CD8-positive, alpha-beta memory T cell (primary cell): ENCODE measurements at regions of chr19 and their contacts with region 1.

Region 1: GRCh38 chr19:7502552-7502951 is 13.4 kb upstream of the ZNF358 start:
- DNase-seq: no peak
- H3K4me3 ChIP-seq: no peak overlapping the region
- H3K4me3 Mint-ChIP-seq: no peak overlapping the region
- H3K27ac ChIP-seq: no peak overlapping the region
- H3K27ac Mint-ChIP-seq: no peak overlapping the region
- H3K4me1 ChIP-seq: peaks cover 8% of the 10 kb centered on the region
- H3K4me1 Mint-ChIP-seq: peaks cover 7 to 12% (median 9%) of the 10 kb centered on the region in 3 donors
- H3K27me3 ChIP-seq: peaks cover 9% of the 10 kb centered on the region
- H3K27me3 Mint-ChIP-seq: peaks cover 45 to 51% of the 10 kb centered on the region in 2 donors

Region 2: GRCh38 chr19:7460562-7460966 is 42.0 kb before region 1 on chr19:
- CTCF ChIA-PET with region 1: no interaction called
- POLR2A ChIA-PET with region 1: no interaction called
- DNase-seq: no peak
- H3K4me3 ChIP-seq: no peak overlapping the region
- H3K4me3 Mint-ChIP-seq: no peak overlapping the region
- H3K27ac ChIP-seq: no peak overlapping the region
- H3K27ac Mint-ChIP-seq: peak overlapping the region in 1 of 8 donors; percentile 10
- H3K4me1 ChIP-seq: no peaks in the 10 kb centered on the region
- H3K4me1 Mint-ChIP-seq: peaks cover 2 to 7% (median 4%) of the 10 kb centered on the region in 3 donors
- H3K27me3 ChIP-seq: no peaks in the 10 kb centered on the region
- H3K27me3 Mint-ChIP-seq: no peaks in the 10 kb centered on the region

Region 3: DNA sequence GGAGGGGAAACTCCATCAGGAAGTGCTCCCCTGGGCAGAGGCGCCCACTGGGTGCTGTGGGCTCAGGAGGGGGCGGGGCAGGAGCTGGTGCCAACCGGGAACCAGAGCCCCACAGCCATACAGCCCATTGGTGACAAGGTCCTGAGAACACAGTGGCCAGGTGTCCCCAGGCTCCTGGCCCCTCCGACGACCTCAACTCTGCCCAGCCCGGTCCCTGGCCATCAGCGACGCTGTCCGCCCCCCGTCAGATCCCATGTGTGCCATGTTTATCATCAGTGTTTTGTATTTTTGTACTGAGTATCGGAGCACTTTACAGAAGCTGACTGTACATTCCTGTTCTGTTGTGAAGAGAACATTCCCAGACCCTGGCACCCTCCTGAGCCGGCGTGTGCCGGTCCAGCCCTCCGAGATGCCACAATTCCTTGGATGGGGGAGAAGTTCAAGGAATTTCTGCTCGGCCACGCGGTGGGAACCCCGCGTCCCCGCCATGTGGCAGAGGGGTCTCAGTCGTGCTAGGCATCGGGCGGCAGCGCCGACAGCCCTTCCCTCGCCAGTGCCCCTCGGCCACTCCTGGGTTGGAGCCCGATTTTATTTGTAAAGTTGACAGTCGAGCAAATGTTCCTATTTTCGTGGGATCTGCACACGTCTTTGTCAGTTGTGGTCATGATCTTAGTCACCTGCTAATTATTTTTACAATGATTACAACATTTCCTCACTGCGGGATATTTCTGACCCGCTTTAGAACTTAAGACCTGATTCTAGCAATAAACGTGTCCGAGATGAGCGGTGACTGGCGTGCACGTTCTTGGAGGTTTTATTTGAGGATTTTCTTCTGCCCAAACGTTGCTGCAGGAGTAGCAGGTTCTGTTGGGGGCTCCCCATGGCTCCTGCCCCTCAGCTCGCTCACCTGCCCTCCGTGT is 30.6 kb before region 1 on chr19:
- CTCF ChIA-PET with region 1: no interaction called
- POLR2A ChIA-PET with region 1: no interaction called
- DNase-seq: no peak
- H3K4me3 ChIP-seq: no peak overlapping the region
- H3K4me3 Mint-ChIP-seq: no peak overlapping the region
- H3K27ac ChIP-seq: no peak overlapping the region
- H3K27ac Mint-ChIP-seq: peak overlapping the region in 2 of 8 donors; percentile 29 to 32
- H3K4me1 ChIP-seq: no peaks in the 10 kb centered on the region
- H3K4me1 Mint-ChIP-seq: no peaks in the 10 kb centered on the region
- H3K27me3 ChIP-seq: no peaks in the 10 kb centered on the region
- H3K27me3 Mint-ChIP-seq: peaks cover 0 to 2% of the 10 kb centered on the region in 2 donors

Region 4: GRCh38 chr19:7488736-7489353 is 13.7 kb before region 1 on chr19 and contains the start of gene PEX11G:
- CTCF ChIA-PET with region 1: no interaction called
- POLR2A ChIA-PET with region 1: interaction called, 17 read pairs
- DNase-seq: peak; percentile 85 to 91 (median 89)
- H3K4me3 ChIP-seq: peak within 1 kb of the TSS; percentile 90
- H3K4me3 Mint-ChIP-seq: peak within 1 kb of the TSS; percentile 80 to 94 (median 87)
- H3K27ac ChIP-seq: peak within 1 kb of the TSS; percentile 72
- H3K27ac Mint-ChIP-seq: peak within 1 kb of the TSS; percentile 70 to 95 (median 90)
- H3K4me1 ChIP-seq: peaks cover 12% of the 10 kb centered on the region
- H3K4me1 Mint-ChIP-seq: peaks cover 9 to 18% (median 17%) of the 10 kb centered on the region in 3 donors
- H3K27me3 ChIP-seq: no peaks in the 10 kb centered on the region
- H3K27me3 Mint-ChIP-seq: no peaks in the 10 kb centered on the region
- total RNA-seq, gene PEX11G: 0.94 to 0.95 TPM

Region 5: GRCh38 chr19:7718668-7719067 is 216.1 kb after region 1 on chr19:
- CTCF ChIA-PET with region 1: no interaction called
- POLR2A ChIA-PET with region 1: no interaction called
- DNase-seq: peak in 1 of 5 donors; percentile 44
- H3K4me3 ChIP-seq: no peak overlapping the region
- H3K4me3 Mint-ChIP-seq: peak overlapping the region in 4 of 7 donors; percentile 35 to 51 (median 42)
- H3K27ac ChIP-seq: no peak overlapping the region
- H3K27ac Mint-ChIP-seq: peak overlapping the region in 5 of 8 donors; percentile 42 to 74 (median 59)
- H3K4me1 ChIP-seq: peaks cover 9% of the 10 kb centered on the region
- H3K4me1 Mint-ChIP-seq: peaks cover 5 to 11% (median 9%) of the 10 kb centered on the region in 3 donors
- H3K27me3 ChIP-seq: no peaks in the 10 kb centered on the region
- H3K27me3 Mint-ChIP-seq: peaks cover 3 to 7% of the 10 kb centered on the region in 2 donors

Region 6: GRCh38 chr19:8877854-8878705 is 1375.5 kb after region 1 on chr19:
- CTCF ChIA-PET with region 1: no interaction called
- POLR2A ChIA-PET with region 1: no interaction called
- DNase-seq: no peak
- H3K4me3 ChIP-seq: no peak overlapping the region
- H3K4me3 Mint-ChIP-seq: no peak overlapping the region
- H3K27ac ChIP-seq: no peak overlapping the region
- H3K27ac Mint-ChIP-seq: no peak overlapping the region
- H3K4me1 ChIP-seq: no peaks in the 10 kb centered on the region
- H3K4me1 Mint-ChIP-seq: no peaks in the 10 kb centered on the region
- H3K27me3 ChIP-seq: no peaks in the 10 kb centered on the region
- H3K27me3 Mint-ChIP-seq: peaks cover 8 to 32% of the 10 kb centered on the region in 2 donors